Mammary epithelial cell (primary cell): ENCODE measurements at regions of chr13 and their contacts with region 1.

Region 1: DNA sequence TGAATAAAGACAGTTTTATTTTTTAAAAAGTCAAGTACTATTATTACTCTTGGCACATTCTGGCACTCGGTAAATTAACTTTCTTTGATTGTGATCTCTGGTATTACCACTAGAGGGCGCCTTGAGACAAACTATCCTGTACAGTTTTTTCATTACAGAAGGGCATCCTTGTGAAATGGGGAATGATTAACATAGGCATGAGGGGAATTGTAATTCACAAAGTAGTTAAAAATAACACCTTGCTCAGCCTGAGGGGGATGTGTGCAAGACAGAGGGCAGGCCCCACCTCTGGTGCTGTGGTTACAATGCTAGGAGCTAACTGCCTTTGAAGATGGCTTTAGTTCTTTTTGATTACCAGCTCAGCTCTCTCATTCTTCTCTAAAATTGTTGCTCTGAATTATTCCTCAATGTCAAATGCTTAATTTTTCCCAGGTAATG is 24.2 kb upstream of the C1QTNF9B start:
- DNase-seq: peak; percentile 55
- H3K4me3 ChIP-seq: no peak overlapping the region
- H3K27ac ChIP-seq: no peak overlapping the region
- H3K4me1 ChIP-seq: peaks cover 4% of the 10 kb centered on the region
- H3K27me3 ChIP-seq: no peaks in the 10 kb centered on the region
- CTCF ChIP-seq: peak; percentile 55 to 73

Region 2: GRCh38 chr13:23778879-23779278 is 142.6 kb before region 1 on chr13:
- CTCF ChIA-PET with region 1: no interaction called
- dilution Hi-C with region 1: no loop called
- in situ Hi-C with region 1: no loop called
- intact Hi-C with region 1: no loop called
- DNase-seq: peak; percentile 52
- H3K4me3 ChIP-seq: no peak overlapping the region
- H3K27ac ChIP-seq: no peak overlapping the region
- H3K4me1 ChIP-seq: no peaks in the 10 kb centered on the region
- H3K27me3 ChIP-seq: no peaks in the 10 kb centered on the region
- CTCF ChIP-seq: no peak

Region 3: DNA sequence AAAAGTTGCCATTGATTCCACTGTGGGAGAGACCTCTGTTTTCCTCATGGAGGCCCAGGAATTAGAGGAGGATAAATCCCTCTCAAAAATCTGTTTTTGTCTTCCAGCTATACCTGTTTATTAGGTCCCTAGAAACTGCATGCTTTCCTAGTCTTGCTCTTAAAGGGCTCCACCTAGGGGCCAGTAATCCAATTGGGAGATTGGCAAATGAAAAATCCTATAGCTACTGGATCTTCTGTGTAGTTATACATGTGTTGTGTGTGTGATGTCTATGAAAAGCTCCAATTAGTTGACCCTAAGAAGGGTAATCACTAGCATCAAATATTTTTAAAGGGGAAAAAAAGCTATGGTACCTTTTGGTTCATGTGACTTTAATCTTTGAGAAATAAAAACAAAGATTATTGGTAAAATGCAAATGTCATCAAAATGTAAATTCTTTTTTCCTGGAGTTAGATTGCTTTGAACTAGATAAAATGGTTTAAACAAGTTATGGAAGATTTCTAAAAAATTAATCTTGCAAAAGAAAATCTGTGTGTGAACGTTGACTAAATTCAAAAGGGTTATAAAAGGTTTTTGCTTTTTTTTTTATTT is 39.2 kb after region 1 on chr13:
- CTCF ChIA-PET with region 1: interaction called, 9 read pairs
- dilution Hi-C with region 1: no loop called
- in situ Hi-C with region 1: no loop called
- intact Hi-C with region 1: loop called (anchors 1 kb)
- DNase-seq: peak; percentile 47
- H3K4me3 ChIP-seq: no peak overlapping the region
- H3K27ac ChIP-seq: no peak overlapping the region
- H3K4me1 ChIP-seq: peaks cover 16% of the 10 kb centered on the region
- H3K27me3 ChIP-seq: no peaks in the 10 kb centered on the region
- CTCF ChIP-seq: peak; percentile 76 to 84

Region 4: DNA sequence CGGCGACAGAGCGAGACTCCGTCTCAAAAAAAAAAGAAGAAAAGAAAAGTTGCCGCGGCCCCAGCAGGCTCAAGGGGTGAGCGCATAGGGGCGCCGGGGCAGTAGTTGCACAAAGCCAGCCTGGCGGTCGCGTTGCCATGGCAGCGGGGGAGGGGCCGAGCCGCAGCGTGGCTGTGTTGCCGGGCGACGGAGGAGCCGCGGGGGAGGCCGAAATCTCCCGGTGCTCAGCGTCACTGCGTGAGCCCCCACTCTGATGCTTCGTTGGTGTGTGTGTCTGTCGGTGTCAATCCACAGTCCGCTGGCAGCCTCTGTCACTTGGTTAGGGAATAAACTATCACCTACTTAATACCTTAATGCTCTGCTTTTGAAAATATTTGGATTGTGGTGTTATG is 58.7 kb after region 1 on chr13:
- CTCF ChIA-PET with region 1: no interaction called
- dilution Hi-C with region 1: no loop called
- in situ Hi-C with region 1: no loop called
- intact Hi-C with region 1: no loop called
- DNase-seq: peak; percentile 60
- H3K4me3 ChIP-seq: peak overlapping the region; percentile 29 to 49 (median 44)
- H3K27ac ChIP-seq: no peak overlapping the region
- H3K4me1 ChIP-seq: peaks cover 18% of the 10 kb centered on the region
- H3K27me3 ChIP-seq: peaks cover 4% of the 10 kb centered on the region
- CTCF ChIP-seq: no peak

Region 5: DNA sequence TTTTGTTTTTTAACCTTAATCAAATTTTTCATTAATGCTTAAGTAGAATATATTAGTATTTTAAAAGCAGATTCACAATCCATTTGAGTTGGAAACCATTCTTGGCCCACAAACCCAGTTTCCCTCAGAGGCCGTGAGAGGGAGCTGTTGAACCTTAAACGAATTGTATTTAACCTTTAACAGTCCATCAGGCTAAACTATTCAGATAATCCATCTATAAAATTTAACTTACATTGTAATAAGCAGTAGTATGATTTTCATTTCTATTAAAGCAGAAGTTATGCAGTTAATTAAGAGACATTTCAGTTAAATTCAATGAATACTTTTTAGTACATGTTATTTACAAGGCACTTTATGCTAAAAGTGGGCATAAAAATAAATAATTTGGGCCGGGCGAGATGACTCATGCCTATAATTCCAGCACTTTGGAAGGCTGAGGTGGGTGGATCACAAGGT is 98.9 kb after region 1 on chr13:
- CTCF ChIA-PET with region 1: no interaction called
- dilution Hi-C with region 1: no loop called
- in situ Hi-C with region 1: no loop called
- intact Hi-C with region 1: loop called (anchors 1 kb)
- DNase-seq: peak; percentile 29
- H3K4me3 ChIP-seq: no peak overlapping the region
- H3K27ac ChIP-seq: no peak overlapping the region
- H3K4me1 ChIP-seq: no peaks in the 10 kb centered on the region
- H3K27me3 ChIP-seq: no peaks in the 10 kb centered on the region
- CTCF ChIP-seq: peak; percentile 71 to 79